Heart right ventricle (tissue), 16 donors: ENCODE measurements at regions of chr4 and their contacts with region 1.

Region 1: GRCh38 chr4:25925486-25926201 is 11.6 kb downstream of the SMIM20 start:
- DNase-seq: peak; percentile 28 to 37
- ATAC-seq: peak in 2 of 8 donors; percentile 47 to 49
- H3K4me3 ChIP-seq: no peak overlapping the region
- H3K27ac ChIP-seq: no peak overlapping the region
- H3K4me1 ChIP-seq: peaks cover 0 to 64% (median 32%) of the 10 kb centered on the region in 9 donors
- H3K27me3 ChIP-seq: no peaks in the 10 kb centered on the region
- CTCF ChIP-seq: peak; percentile 30 to 67 (median 56)

Region 2: GRCh38 chr4:25970226-25970675 is 44.6 kb after region 1 on chr4:
- intact Hi-C with region 1: loop called in 1 of 10 experiments (anchors 5 kb)
- DNase-seq: peak; percentile 36 to 46
- ATAC-seq: peak; percentile 54 to 77 (median 70)
- H3K4me3 ChIP-seq: no peak overlapping the region
- H3K27ac ChIP-seq: peak overlapping the region in 5 of 10 donors; percentile 9 to 75 (median 34)
- H3K4me1 ChIP-seq: peaks cover 3 to 51% (median 25%) of the 10 kb centered on the region in 9 donors
- H3K27me3 ChIP-seq: peaks cover 0 to 10% (median 0%) of the 10 kb centered on the region in 7 donors
- CTCF ChIP-seq: no peak

Region 3: DNA sequence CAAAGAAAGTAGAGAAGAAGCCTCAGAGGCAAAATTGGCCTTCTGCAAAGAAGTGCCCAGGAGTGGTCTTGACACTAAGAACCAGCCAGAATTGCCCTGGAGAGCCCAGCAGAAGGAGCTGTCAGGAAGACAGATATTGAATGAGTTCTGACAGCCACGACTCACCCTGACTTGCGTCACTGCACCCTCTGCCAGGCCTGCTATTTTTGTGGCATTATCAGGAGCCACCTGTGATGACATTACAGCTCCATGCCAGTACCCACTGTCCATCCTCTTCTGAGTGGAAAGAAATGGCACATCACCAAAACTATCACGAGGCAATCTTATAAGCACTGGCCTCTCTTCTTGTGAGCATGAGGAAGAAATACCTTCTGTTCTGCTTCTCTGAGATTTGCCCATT is 56.1 kb after region 1 on chr4:
- intact Hi-C with region 1: loop called in 4 of 10 experiments (anchors 5 to 10 kb)
- DNase-seq: peak; percentile 39 to 41
- ATAC-seq: peak in 6 of 8 donors; percentile 73 to 96 (median 94)
- H3K4me3 ChIP-seq: no peak overlapping the region
- H3K27ac ChIP-seq: peak overlapping the region in 1 of 10 donors; percentile 44
- H3K4me1 ChIP-seq: peaks cover 0 to 7% (median 0%) of the 10 kb centered on the region in 9 donors
- H3K27me3 ChIP-seq: no peaks in the 10 kb centered on the region
- CTCF ChIP-seq: no peak

Region 4: DNA sequence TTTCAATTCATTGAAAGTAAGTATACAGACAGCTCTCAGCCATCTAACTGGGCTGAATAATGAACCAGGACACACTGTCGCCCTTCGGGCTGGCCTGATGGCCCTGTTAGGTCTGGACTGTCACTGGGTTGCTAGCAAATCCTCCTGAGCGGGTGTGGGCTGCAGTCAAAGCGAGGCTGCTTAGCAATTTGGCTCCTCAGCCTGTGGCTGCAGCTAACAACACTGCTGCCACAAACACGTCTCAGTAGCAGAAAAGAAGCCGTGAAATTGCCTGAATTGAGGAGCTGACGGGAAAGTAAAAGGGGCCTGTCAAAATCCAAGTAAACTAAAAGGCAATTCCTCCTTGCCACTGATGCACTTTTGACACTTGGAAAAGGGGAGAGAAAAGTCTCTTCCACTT is 61.2 kb after region 1 on chr4:
- intact Hi-C with region 1: loop called in 4 of 10 experiments (anchors 5 to 10 kb)
- DNase-seq: no peak
- ATAC-seq: no peak
- H3K4me3 ChIP-seq: no peak overlapping the region
- H3K27ac ChIP-seq: no peak overlapping the region
- H3K4me1 ChIP-seq: peaks cover 0 to 14% (median 9%) of the 10 kb centered on the region in 9 donors
- H3K27me3 ChIP-seq: no peaks in the 10 kb centered on the region
- CTCF ChIP-seq: no peak

Region 5: DNA sequence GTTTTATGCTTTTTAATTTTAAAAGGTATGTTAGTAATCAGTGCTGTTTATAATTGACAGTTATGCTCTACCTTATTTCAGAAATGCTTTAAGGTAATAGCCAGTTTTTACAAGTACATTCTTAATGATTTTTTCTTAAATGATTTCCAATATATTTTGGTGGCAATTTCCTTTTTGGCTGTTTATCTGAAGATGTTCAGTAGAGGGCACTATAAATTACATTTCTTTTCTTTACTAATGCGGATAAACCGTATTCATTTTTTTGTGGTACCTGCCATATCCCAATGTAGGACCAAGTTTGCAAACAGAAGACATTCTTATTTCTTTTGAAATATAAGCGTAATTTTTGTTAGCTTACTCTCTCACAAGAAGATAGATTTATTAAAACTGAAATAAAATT is 499.2 kb after region 1 on chr4:
- intact Hi-C with region 1: no loop called
- DNase-seq: no peak
- ATAC-seq: no peak
- H3K4me3 ChIP-seq: no peak overlapping the region
- H3K27ac ChIP-seq: no peak overlapping the region
- H3K4me1 ChIP-seq: peaks cover 0 to 17% (median 7%) of the 10 kb centered on the region in 9 donors
- H3K27me3 ChIP-seq: no peaks in the 10 kb centered on the region
- CTCF ChIP-seq: no peak